GM13976 (cell line): ENCODE measurements at regions of chr4 and their contacts with region 1.

Region 1: GRCh38 chr4:105461221-105461620 is 12.6 kb downstream of the PPA2 start:
- DNase-seq: no peak
- CTCF ChIP-seq: no peak

Region 2: DNA sequence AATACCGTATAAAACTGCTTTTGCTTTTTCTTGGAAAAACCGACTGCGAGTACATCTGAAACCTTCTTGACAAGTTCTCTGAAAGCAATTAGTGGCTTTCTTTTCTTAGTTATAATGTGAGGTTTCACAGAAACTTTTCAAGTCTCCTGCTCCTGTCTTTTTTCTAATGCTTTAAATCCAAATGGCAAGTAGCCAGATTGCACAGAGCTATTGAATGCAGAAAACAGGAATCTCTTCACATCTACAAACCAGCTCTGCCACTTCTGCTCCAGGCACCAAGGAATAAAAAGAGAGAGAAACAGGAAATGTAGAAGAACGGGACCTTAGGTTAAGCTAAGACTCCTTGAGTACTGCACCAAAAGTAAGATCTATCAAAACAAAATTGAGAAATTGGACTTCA is 581.9 kb before region 1 on chr4:
- in situ Hi-C with region 1: loop called (anchors 10 kb)
- DNase-seq: no peak
- CTCF ChIP-seq: no peak